ENCODE measurements at regions of chr20 and their contacts with region 1.

Region 1: DNA sequence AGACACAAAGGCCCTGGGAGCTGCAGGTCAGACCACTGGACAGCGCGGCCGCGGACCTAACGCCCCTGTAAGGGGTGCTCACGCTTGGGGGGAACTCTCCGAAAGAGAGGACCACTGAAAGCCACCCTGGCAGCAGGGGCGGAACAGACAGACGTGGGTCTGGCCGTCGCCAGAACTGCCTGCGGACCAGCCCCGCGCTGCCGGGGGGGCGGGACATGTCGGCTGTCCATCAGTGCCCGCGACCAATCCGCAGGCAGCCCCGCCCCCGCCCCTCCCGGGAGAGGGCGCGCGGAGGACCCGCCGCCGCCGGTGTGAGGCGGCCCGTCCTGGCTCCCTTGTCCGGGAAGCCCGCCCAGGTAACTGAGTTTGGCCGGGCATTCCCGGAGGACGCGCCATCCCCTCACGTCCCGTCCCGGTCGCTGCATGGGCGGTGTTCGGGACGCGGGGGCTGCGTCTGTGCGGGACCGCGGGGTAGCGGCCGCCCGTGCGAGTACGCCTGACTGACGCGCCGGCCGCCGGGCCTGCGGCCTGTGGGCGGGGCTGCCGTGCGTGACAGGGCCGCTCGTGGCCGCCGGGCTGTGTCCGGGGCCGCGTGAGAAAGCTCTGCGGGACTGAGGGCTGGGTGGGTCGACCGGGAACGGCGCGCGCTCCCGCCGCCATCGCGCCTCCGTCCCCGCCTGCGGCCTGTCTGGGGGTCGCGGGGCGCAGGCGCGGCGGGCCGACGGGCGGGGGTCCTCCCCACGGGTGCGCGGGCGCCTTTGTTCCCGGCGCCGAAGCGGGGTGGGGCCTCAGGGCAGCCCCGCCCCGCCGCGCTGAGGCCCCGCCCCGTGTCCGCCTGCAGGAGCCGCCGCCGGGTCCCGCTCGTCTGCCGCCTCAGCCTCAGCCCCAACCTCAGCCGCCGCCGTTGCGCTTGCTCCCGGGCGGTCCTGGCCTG is at the start of gene PLCG1:
- DNase-seq: peak; percentile 89
- ATAC-seq: peak; percentile 75
- H3K4me3 ChIP-seq: peak within 1 kb of the TSS; percentile 7 to 83 (median 71)
- H3K4me3 Mint-ChIP-seq: peak within 1 kb of the TSS; percentile 93
- H3K27ac ChIP-seq: peak within 1 kb of the TSS; percentile 45 to 73
- H3K27ac Mint-ChIP-seq: peak within 1 kb of the TSS; percentile 91
- H3K4me1 ChIP-seq: peaks cover 43 to 62% of the 10 kb centered on the region in 2 donors
- H3K4me1 Mint-ChIP-seq: peaks cover 66% of the 10 kb centered on the region
- H3K27me3 ChIP-seq: no peaks in the 10 kb centered on the region
- H3K27me3 Mint-ChIP-seq: no peaks in the 10 kb centered on the region
- CTCF ChIP-seq: no peak
- total RNA-seq, gene PLCG1: 98.7 and 106 TPM in 2 replicates

Region 2: GRCh38 chr20:41110930-41111577 is 25.9 kb before region 1 on chr20:
- CTCF ChIA-PET with region 1: interaction called, 16 read pairs
- POLR2A ChIA-PET with region 1: interaction called, 4 read pairs
- intact Hi-C with region 1: no loop called
- DNase-seq: peak; percentile 19
- ATAC-seq: no peak
- H3K4me3 ChIP-seq: no peak overlapping the region
- H3K4me3 Mint-ChIP-seq: no peak overlapping the region
- H3K27ac ChIP-seq: no peak overlapping the region
- H3K27ac Mint-ChIP-seq: peak overlapping the region; percentile 35
- H3K4me1 ChIP-seq: no peaks in the 10 kb centered on the region
- H3K4me1 Mint-ChIP-seq: peaks cover 17% of the 10 kb centered on the region
- H3K27me3 ChIP-seq: no peaks in the 10 kb centered on the region
- H3K27me3 Mint-ChIP-seq: no peaks in the 10 kb centered on the region
- CTCF ChIP-seq: no peak

Region 3: DNA sequence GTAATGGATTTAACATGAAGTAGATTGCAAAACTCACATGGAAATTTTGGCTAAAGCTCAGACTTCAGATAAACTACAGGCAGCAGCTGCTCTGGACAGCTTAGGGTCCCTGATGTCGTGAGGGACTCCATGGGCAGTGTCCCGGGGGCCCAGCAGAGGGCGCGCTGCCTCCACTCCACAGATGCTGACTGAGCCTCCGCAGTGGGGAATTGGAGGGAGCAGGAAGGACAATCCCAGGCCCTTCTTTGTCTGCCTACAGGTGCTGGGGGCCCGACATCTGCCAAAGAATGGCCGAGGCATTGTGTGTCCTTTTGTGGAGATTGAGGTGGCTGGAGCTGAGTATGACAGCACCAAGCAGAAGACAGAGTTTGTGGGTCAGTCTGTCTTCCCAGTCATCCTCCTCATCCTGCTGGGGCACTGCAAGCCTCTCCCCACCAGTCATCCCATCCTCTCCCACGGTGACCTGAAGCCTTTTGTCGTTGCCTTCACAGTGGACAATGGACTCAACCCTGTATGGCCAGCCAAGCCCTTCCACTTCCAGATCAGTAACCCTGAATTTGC is 36.3 kb after region 1 on chr20:
- CTCF ChIA-PET with region 1: interaction called, 57 read pairs
- POLR2A ChIA-PET with region 1: interaction called, 9 read pairs
- intact Hi-C with region 1: loop called (anchors 1 kb)
- DNase-seq: peak; percentile 71
- ATAC-seq: peak; percentile 89
- H3K4me3 ChIP-seq: no peak overlapping the region
- H3K4me3 Mint-ChIP-seq: no peak overlapping the region
- H3K27ac ChIP-seq: no peak overlapping the region
- H3K27ac Mint-ChIP-seq: peak overlapping the region; percentile 61
- H3K4me1 ChIP-seq: no peaks in the 10 kb centered on the region
- H3K4me1 Mint-ChIP-seq: no peaks in the 10 kb centered on the region
- H3K27me3 ChIP-seq: no peaks in the 10 kb centered on the region
- H3K27me3 Mint-ChIP-seq: no peaks in the 10 kb centered on the region
- CTCF ChIP-seq: peak; percentile 89

Region 4: DNA sequence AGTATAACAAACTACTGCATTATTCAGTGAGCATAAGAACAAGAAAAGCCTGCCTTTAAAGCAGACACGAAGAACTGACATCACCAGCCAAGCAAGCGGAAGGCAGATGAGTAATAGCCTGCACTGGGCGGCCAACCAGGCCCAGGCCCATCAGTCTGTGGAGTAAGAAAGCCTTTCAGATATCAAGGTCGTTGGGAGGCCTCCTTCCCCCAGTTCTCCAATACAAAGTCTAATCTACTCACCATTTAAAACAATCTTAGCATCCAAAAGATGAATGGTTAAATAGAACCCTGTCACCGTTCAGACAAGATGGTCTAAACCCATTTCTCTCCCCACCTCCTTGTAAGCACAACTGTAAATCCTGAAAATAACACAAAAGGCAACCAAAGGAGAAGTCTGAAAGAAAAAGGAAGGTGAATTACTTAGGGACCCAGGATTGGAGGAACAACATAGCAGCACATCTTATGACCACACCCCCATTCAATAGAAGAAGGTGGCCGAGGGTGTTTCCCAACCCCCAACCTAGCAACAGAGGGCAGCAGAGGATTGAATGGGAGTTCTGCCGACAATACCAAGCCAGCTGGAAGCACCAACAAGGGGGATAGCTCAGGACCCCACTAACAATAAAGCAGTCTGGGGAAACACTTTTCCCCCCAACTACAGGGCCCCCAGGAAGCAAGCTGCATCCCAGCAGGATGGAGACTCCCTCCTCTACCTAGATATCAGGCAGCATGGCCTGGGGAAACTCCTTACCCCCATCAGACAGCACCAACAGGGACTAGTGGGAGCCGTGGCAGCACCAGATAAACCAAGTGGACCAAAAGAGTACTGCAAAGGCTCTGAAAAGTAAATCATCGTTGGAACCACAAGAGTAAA is 112.7 kb after region 1 on chr20:
- CTCF ChIA-PET with region 1: interaction called, 3 read pairs
- POLR2A ChIA-PET with region 1: no interaction called
- intact Hi-C with region 1: loop called (anchors 5 kb)
- DNase-seq: peak; percentile 39
- ATAC-seq: peak; percentile 77
- H3K4me3 ChIP-seq: peak overlapping the region in 1 of 5 experiments; percentile 40
- H3K4me3 Mint-ChIP-seq: peak overlapping the region; percentile 67
- H3K27ac ChIP-seq: peak overlapping the region; percentile 42 to 49
- H3K27ac Mint-ChIP-seq: peak overlapping the region; percentile 85
- H3K4me1 ChIP-seq: peaks cover 53 to 57% of the 10 kb centered on the region in 2 donors
- H3K4me1 Mint-ChIP-seq: peaks cover 52% of the 10 kb centered on the region
- H3K27me3 ChIP-seq: no peaks in the 10 kb centered on the region
- H3K27me3 Mint-ChIP-seq: no peaks in the 10 kb centered on the region
- CTCF ChIP-seq: no peak

Region 5: DNA sequence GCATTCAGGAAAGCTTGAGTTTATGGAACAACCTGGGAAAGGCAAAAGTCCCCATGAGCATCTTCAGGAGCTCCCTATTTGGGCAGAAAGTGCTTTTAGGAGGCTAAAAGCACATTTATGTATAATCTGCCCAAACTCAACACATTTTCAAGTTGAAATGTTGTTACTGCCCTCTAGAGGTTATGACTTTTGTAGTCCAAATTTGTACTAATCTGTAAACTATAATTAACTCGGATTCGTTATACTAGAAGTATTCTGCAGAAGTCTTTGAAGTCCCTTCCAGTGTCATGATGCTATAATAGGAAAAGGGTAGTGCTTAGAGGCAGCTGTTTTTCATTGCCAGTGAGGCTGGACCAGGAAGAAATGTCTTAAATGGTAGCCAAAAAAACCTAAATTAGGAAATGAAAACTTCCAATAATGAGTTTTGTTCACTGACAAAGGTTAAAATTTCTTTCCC is 274.5 kb after region 1 on chr20:
- CTCF ChIA-PET with region 1: interaction called, 16 read pairs
- POLR2A ChIA-PET with region 1: no interaction called
- intact Hi-C with region 1: loop called (anchors 1 kb)
- DNase-seq: no peak
- ATAC-seq: no peak
- H3K4me3 ChIP-seq: no peak overlapping the region
- H3K4me3 Mint-ChIP-seq: no peak overlapping the region
- H3K27ac ChIP-seq: no peak overlapping the region
- H3K27ac Mint-ChIP-seq: no peak overlapping the region
- H3K4me1 ChIP-seq: no peaks in the 10 kb centered on the region
- H3K4me1 Mint-ChIP-seq: no peaks in the 10 kb centered on the region
- H3K27me3 ChIP-seq: no peaks in the 10 kb centered on the region
- H3K27me3 Mint-ChIP-seq: no peaks in the 10 kb centered on the region
- CTCF ChIP-seq: no peak